Naive thymus-derived CD4-positive, alpha-beta T cell (primary cell): ENCODE measurements at regions of chr3 and their contacts with region 1.

Region 1: DNA sequence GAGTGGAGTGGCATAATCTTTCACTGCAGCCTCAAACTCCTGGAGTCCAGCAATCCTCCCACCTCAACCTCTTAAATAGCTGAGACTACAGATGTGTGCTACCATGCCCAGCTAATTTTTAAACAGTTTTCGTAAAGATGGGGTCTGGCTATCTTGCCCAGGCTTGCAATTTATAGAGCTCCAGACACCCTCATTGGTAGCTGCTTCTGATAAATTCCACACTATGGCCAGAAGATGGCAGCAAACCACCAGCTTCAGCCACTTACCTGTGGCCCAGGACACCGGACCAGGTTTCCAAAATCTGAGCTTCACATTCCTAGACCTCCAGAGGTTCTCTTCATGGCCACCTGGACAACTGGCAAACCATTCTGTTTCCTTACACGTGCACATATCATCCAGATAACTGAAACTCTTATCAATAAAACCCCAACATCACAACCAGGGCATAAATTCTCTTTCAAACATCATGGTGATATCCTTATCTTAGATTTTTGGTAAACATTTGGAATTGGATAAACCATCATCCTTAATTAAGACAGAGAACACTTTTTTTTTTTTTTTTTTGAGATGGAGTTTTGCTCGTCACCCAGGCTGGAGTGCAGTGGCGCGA is 28.9 kb downstream of the FBXW12 start:
- DNase-seq: peak; percentile 33 to 76 (median 66)
- ATAC-seq: peak; percentile 86
- H3K4me3 ChIP-seq: no peak overlapping the region
- H3K4me3 Mint-ChIP-seq: no peak overlapping the region
- H3K27ac ChIP-seq: no peak overlapping the region
- H3K27ac Mint-ChIP-seq: peak overlapping the region in 1 of 9 donors; percentile 47
- H3K4me1 ChIP-seq: no peaks in the 10 kb centered on the region
- H3K4me1 Mint-ChIP-seq: peaks cover 0 to 3% (median 0%) of the 10 kb centered on the region in 7 donors
- H3K27me3 ChIP-seq: no peaks in the 10 kb centered on the region
- H3K27me3 Mint-ChIP-seq: peaks cover 0 to 7% (median 3%) of the 10 kb centered on the region in 5 donors

Region 2: GRCh38 chr3:48273594-48274211 is 127.2 kb before region 1 on chr3:
- CTCF ChIA-PET with region 1: interaction called, 5 read pairs
- POLR2A ChIA-PET with region 1: no interaction called
- intact Hi-C with region 1: loop called (anchors 1 kb)
- DNase-seq: peak in 8 of 9 donors; percentile 37 to 66 (median 55)
- ATAC-seq: peak; percentile 60
- H3K4me3 ChIP-seq: no peak overlapping the region
- H3K4me3 Mint-ChIP-seq: no peak overlapping the region
- H3K27ac ChIP-seq: no peak overlapping the region
- H3K27ac Mint-ChIP-seq: peak overlapping the region in 4 of 9 donors; percentile 8 to 74 (median 51)
- H3K4me1 ChIP-seq: peaks cover 4 to 14% of the 10 kb centered on the region in 2 donors
- H3K4me1 Mint-ChIP-seq: peaks cover 6 to 29% (median 21%) of the 10 kb centered on the region in 7 donors
- H3K27me3 ChIP-seq: no peaks in the 10 kb centered on the region
- H3K27me3 Mint-ChIP-seq: no peaks in the 10 kb centered on the region

Region 3: DNA sequence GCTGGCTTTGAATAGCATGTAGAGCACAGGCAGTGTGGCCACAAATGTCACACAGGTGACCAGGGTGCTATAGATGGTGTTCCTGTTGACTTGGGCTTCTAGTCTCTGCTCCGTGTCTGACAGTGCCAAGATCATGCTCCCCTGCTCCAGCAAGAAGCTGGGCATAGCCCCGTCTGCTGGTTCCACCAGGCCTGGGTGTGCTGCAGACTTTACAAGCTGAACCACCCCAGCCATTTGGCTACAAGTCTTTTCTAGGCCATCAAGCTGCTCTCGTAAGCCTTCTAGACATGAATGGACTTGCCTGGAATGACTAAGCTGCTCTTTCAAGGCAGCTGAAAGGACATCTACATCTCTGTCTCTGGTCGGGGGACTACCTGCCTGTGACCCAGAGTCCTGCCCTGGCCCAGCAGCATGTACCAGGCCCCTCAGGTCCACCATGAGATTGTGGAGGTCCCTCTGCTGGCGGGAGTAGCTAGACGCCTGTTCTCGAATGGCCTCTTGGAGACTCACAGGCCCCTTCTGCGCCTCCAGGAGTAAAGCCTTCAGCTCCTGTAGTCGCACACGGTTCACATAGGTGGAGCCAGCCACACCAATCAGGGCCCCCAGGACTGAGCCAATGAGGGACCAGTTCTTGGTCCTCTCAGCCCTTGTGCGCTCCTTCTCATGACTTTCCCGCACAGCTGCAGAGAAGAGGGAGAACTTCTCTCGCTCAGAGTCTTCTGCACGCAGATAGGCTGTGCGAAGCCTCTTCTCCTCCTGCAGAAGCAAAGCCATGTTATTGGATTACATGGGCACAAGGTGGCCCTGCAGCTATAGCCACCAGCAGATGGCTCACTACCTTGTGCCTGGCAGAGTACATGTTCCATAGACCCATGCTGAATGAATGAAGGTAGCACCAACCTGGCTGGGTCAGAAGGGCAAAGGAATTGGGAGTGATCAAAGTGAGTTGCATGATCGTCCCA is 31.8 kb after region 1 on chr3:
- CTCF ChIA-PET with region 1: interaction called, 115 read pairs
- POLR2A ChIA-PET with region 1: interaction called, 14 read pairs
- intact Hi-C with region 1: loop called (anchors 1 kb)
- DNase-seq: no peak
- ATAC-seq: no peak
- H3K4me3 ChIP-seq: no peak overlapping the region
- H3K4me3 Mint-ChIP-seq: no peak overlapping the region
- H3K27ac ChIP-seq: no peak overlapping the region
- H3K27ac Mint-ChIP-seq: peak overlapping the region in 1 of 9 donors; percentile 25
- H3K4me1 ChIP-seq: peaks cover 8 to 21% of the 10 kb centered on the region in 2 donors
- H3K4me1 Mint-ChIP-seq: peaks cover 2 to 25% (median 5%) of the 10 kb centered on the region in 7 donors
- H3K27me3 ChIP-seq: no peaks in the 10 kb centered on the region
- H3K27me3 Mint-ChIP-seq: peaks cover 0 to 21% (median 0%) of the 10 kb centered on the region in 5 donors

Region 4: DNA sequence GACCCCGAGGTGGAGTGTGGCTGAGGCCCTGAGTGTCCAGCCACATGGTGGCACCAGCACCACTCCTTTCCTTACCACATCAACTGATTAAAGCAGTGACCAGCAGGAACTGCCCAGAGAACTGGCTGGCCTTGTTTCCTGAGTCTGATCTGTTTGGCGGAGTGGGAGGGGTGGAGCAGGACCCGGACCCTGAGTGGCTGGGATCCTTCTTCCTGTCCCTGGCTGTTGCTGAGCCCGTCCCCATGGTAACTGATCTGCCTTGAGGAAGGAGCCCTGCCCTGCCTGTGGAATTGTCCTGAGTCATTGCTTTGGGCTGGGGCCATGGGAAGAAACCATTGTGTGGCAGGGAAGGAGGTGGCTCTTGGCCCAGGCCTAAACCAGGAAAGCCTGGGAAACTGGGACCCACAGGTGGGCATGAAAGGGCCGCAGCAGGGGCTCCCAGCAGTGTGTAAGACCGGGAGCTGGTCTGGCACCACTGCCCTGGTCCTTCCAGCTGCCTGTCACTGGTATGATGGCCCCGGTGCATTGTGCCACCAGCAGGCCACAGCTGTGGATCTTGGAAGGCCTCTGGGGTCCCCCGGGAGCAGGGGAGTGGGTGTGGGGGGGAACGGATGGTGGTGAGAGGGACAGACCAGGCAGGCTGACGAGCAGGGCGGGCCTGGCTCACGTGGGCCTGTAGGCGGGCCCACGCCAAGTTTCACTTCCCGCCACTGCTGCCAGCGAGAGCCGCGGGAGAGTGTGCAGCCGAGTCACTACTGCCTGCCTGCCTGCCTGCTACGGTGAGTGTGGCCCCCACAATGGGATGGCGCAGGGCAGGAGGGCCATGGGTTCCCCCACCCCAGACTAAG is 64.8 kb after region 1 on chr3:
- CTCF ChIA-PET with region 1: interaction called, 5 read pairs
- POLR2A ChIA-PET with region 1: no interaction called
- intact Hi-C with region 1: loop called in 1 of 2 experiments (anchors 2 kb)
- DNase-seq: peak; percentile 64 to 84 (median 76)
- ATAC-seq: peak; percentile 91
- H3K4me3 ChIP-seq: peak overlapping the region; percentile 87
- H3K4me3 Mint-ChIP-seq: peak overlapping the region; percentile 87 to 98 (median 91)
- H3K27ac ChIP-seq: peak overlapping the region; percentile 95
- H3K27ac Mint-ChIP-seq: peak overlapping the region; percentile 89 to 99 (median 95)
- H3K4me1 ChIP-seq: peaks cover 41 to 53% of the 10 kb centered on the region in 2 donors
- H3K4me1 Mint-ChIP-seq: peaks cover 25 to 62% (median 57%) of the 10 kb centered on the region in 7 donors
- H3K27me3 ChIP-seq: no peaks in the 10 kb centered on the region
- H3K27me3 Mint-ChIP-seq: no peaks in the 10 kb centered on the region

Region 5: DNA sequence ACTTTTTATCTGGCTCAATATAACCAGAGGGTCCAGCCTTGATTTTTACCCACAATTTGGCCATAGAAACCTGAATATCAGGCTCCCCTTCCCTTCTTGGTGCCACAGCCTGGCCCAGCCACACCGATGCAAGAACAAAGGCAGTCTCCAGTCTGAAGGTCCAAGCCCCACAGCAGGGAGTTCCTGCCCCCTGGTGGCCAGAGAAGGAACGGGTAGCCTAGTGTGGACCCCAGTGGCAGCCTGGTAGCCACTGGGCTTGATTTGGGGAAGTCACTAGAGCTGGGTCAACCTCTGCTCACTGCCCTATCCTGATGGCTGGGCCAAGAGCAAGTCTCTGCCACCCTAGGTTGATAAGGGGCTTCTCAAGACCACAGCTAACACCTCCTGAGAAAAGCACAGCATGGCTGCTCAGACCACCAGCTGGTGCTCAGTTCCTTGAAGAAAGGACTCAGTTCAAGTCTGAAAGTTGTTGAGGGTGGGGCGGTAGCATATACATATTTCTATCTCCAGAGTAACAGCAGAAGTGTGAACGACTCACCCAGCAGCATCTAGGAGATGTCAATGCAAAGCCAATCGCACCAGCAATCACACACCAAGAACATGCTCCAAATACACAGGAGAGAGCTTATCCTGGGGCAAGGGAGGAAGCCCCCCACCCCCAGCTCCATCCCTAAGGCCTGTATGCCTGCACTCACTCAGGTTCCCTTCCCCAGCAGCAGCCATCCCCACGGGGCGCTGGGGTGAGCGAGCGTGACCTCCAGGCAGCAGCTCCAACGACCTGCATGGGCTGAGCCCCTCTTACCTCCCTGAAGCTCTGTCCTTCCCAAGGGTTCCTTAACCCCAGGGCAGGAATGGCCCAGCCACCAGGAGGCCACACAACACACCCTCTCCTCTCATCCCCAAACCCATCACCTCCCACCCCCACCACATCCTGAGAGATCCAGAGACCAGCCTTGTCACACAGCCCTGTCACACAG is 148.1 kb after region 1 on chr3:
- CTCF ChIA-PET with region 1: interaction called, 187 read pairs
- POLR2A ChIA-PET with region 1: interaction called, 17 read pairs
- intact Hi-C with region 1: loop called (anchors 1 kb)
- DNase-seq: peak; percentile 66 to 86 (median 78)
- ATAC-seq: peak; percentile 97
- H3K4me3 ChIP-seq: no peak overlapping the region
- H3K4me3 Mint-ChIP-seq: no peak overlapping the region
- H3K27ac ChIP-seq: no peak overlapping the region
- H3K27ac Mint-ChIP-seq: peak overlapping the region in 2 of 9 donors; percentile 9 to 48
- H3K4me1 ChIP-seq: no peaks in the 10 kb centered on the region
- H3K4me1 Mint-ChIP-seq: peaks cover 6 to 38% (median 20%) of the 10 kb centered on the region in 7 donors
- H3K27me3 ChIP-seq: no peaks in the 10 kb centered on the region
- H3K27me3 Mint-ChIP-seq: no peaks in the 10 kb centered on the region

Region 6: GRCh38 chr3:48656061-48656840 is 255.3 kb after region 1 on chr3:
- CTCF ChIA-PET with region 1: no interaction called
- POLR2A ChIA-PET with region 1: no interaction called
- intact Hi-C with region 1: loop called in 1 of 2 experiments (anchors 1 kb)
- DNase-seq: peak; percentile 75 to 87 (median 86)
- ATAC-seq: peak; percentile 90
- H3K4me3 ChIP-seq: peak overlapping the region; percentile 70
- H3K4me3 Mint-ChIP-seq: peak overlapping the region; percentile 67 to 86 (median 80)
- H3K27ac ChIP-seq: peak overlapping the region; percentile 65
- H3K27ac Mint-ChIP-seq: peak overlapping the region; percentile 42 to 88 (median 79)
- H3K4me1 ChIP-seq: peaks cover 12 to 14% of the 10 kb centered on the region in 2 donors
- H3K4me1 Mint-ChIP-seq: peaks cover 6 to 23% (median 9%) of the 10 kb centered on the region in 7 donors
- H3K27me3 ChIP-seq: no peaks in the 10 kb centered on the region
- H3K27me3 Mint-ChIP-seq: peaks cover 0 to 15% (median 5%) of the 10 kb centered on the region in 5 donors